ENCODE measurements at regions of chr9 and their contacts with region 1.

Region 1: GRCh38 chr9:6681147-6681956 is 35.8 kb upstream of the GLDC start:
- DNase-seq: peak; percentile 85
- ATAC-seq: peak; percentile 74
- H3K4me3 Mint-ChIP-seq: peak overlapping the region; percentile 97
- H3K27ac Mint-ChIP-seq: peak overlapping the region; percentile 100
- H3K4me1 Mint-ChIP-seq: peaks cover 44% of the 10 kb centered on the region
- H3K27me3 Mint-ChIP-seq: no peaks in the 10 kb centered on the region
- CTCF ChIP-seq: no peak

Region 2: DNA sequence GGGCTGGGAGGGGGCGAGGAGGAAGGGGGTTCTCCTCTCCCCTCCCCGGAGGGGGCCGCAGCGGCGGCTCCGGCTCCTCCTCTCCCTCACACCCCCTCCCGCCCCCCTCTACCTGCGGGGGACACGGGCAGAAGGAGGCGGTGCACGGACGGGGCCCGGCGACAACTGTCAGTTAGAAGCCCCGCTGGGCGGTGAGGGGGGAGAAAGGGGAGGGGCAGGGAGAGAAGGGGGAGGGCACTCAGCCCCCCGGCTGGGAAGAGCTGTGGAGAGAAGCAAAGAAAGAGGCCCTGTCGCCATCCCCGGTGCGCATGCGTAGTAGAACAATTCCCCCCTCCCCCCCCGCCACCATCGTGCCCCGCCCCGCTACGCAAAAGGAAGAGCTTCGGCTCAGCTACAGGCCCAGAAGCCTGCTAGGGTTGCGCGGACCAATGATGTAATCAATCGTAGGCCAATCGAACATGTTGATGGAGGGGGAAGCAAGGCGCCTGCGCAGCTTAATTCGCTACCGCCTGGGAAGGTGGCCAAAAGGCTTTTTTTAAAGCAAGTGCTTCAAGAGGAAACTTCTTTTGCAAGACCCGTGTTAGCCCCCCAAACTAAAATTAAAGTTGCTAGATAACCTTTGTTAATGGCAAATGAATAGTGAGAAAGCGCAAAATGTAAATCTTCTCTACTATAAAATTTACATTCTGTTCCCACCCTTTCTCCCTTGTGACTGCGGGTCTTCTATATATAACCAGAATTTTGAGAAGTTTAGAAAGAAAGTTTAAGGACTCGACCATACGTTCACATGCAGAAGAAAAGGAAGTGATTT is 673.0 kb before region 1 on chr9:
- CTCF ChIA-PET with region 1: no interaction called
- POLR2A ChIA-PET with region 1: interaction called, 4 read pairs
- intact Hi-C with region 1: loop called (anchors 1 kb)
- DNase-seq: peak; percentile 82
- ATAC-seq: peak; percentile 75
- H3K4me3 Mint-ChIP-seq: peak overlapping the region; percentile 85
- H3K27ac Mint-ChIP-seq: peak overlapping the region; percentile 87
- H3K4me1 Mint-ChIP-seq: peaks cover 57% of the 10 kb centered on the region
- H3K27me3 Mint-ChIP-seq: no peaks in the 10 kb centered on the region
- CTCF ChIP-seq: no peak

Region 3: GRCh38 chr9:6428940-6429889 is 252.1 kb before region 1 on chr9:
- CTCF ChIA-PET with region 1: no interaction called
- POLR2A ChIA-PET with region 1: no interaction called
- intact Hi-C with region 1: loop called (anchors 5 kb)
- DNase-seq: no peak
- ATAC-seq: peak; percentile 81
- H3K4me3 Mint-ChIP-seq: peak overlapping the region; percentile 64
- H3K27ac Mint-ChIP-seq: peak overlapping the region; percentile 73
- H3K4me1 Mint-ChIP-seq: peaks cover 80% of the 10 kb centered on the region
- H3K27me3 Mint-ChIP-seq: no peaks in the 10 kb centered on the region
- CTCF ChIP-seq: no peak

Region 4: DNA sequence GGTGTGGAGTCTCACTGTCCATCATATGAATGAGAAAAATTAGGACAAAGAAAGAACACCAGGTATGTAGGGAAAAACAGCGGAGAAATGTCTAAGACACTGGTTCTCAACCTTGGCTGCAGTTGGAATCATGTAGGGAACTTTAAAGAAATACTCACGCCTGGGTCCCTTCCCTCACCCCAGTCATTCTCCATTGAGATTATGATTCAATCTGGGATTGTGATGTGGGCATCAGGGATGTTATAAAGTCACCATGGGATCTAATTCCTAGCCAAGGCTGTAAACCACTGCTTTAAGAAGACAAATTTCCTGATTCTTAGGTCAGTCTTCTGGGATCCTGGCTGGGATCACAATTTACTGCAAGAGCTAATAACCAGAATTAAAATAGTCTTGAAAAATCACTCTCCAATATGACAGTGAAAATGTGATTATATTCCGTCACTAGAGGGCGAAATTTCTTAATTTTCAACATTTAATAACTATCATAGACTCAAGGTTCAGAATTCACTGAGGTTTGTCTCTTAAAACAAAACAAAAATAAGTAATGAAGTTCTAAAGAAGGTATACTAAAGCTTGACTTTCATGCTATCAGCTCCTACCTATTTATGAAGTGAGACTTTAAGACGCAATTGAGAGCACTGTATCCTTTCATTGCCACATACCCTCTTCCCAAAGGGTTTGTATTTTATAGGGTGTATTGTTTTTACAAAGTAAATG is 96.3 kb before region 1 on chr9:
- CTCF ChIA-PET with region 1: interaction called, 19 read pairs
- POLR2A ChIA-PET with region 1: interaction called, 11 read pairs
- intact Hi-C with region 1: loop called (anchors 1 kb)
- DNase-seq: no peak
- ATAC-seq: peak; percentile 54
- H3K4me3 Mint-ChIP-seq: no peak overlapping the region
- H3K27ac Mint-ChIP-seq: no peak overlapping the region
- H3K4me1 Mint-ChIP-seq: peaks cover 41% of the 10 kb centered on the region
- H3K27me3 Mint-ChIP-seq: no peaks in the 10 kb centered on the region
- CTCF ChIP-seq: no peak

Region 5: GRCh38 chr9:6645355-6646292 is 35.7 kb before region 1 on chr9 and contains the start of gene GLDC:
- CTCF ChIA-PET with region 1: interaction called, 3 read pairs
- POLR2A ChIA-PET with region 1: interaction called, 11 read pairs
- intact Hi-C with region 1: loop called (anchors 2 kb)
- DNase-seq: peak; percentile 39
- ATAC-seq: peak; percentile 86
- H3K4me3 Mint-ChIP-seq: peak within 1 kb of the TSS; percentile 80
- H3K27ac Mint-ChIP-seq: no peak within 1 kb of the TSS
- H3K4me1 Mint-ChIP-seq: peaks cover 19% of the 10 kb centered on the region
- H3K27me3 Mint-ChIP-seq: peaks cover 32% of the 10 kb centered on the region
- CTCF ChIP-seq: no peak
- total RNA-seq, gene GLDC: 2.3 and 2.6 TPM in 2 replicates

Region 6: DNA sequence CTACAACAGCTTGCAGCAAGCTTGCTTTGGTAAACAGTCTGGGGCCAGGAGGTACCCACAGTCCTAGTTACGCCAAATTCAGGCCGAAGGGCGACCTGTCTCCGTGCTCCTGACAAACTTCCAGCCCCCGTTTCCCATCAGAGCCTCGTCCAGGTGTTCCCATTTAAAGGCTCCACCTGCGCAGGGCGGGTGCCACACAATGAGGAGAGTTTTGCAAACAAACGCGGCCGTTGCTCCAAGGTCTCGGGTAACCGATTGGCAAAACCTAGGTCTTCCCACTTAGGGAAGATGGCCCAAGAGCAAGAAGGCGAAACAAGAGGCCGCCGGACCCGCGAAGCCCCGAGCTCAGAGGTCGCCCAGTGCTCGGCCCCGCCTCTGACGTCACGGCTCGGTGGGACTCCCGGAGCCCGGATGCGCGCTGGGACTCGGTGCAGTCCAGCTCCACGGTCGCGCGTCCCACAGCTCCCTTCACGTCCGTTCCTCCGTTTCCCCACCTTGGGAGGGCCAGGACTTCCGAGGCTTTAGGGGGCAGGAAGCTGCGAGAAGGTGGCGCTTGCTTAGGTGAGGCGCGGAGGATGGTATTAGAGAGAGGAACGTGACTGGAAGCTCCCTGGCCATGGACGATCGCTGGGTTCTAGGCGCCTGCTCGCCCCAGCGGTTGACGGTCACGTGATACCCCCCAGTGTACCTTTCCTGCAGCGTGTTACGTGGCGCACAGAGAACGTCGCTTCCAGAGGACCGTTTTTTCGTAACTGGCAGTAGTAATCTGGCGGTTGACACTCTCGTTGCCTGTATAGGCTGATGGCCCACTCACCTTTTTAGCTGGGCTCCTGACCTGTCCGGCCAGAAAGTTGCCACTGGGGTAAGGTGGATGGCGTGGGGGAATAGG is 34.6 kb after region 1 on chr9:
- CTCF ChIA-PET with region 1: interaction called, 3 read pairs
- POLR2A ChIA-PET with region 1: interaction called, 53 read pairs
- intact Hi-C with region 1: loop called (anchors 1 kb)
- DNase-seq: peak; percentile 71
- ATAC-seq: peak; percentile 86
- H3K4me3 Mint-ChIP-seq: peak overlapping the region; percentile 90
- H3K27ac Mint-ChIP-seq: peak overlapping the region; percentile 92
- H3K4me1 Mint-ChIP-seq: peaks cover 13% of the 10 kb centered on the region
- H3K27me3 Mint-ChIP-seq: no peaks in the 10 kb centered on the region
- CTCF ChIP-seq: no peak

Region 7: DNA sequence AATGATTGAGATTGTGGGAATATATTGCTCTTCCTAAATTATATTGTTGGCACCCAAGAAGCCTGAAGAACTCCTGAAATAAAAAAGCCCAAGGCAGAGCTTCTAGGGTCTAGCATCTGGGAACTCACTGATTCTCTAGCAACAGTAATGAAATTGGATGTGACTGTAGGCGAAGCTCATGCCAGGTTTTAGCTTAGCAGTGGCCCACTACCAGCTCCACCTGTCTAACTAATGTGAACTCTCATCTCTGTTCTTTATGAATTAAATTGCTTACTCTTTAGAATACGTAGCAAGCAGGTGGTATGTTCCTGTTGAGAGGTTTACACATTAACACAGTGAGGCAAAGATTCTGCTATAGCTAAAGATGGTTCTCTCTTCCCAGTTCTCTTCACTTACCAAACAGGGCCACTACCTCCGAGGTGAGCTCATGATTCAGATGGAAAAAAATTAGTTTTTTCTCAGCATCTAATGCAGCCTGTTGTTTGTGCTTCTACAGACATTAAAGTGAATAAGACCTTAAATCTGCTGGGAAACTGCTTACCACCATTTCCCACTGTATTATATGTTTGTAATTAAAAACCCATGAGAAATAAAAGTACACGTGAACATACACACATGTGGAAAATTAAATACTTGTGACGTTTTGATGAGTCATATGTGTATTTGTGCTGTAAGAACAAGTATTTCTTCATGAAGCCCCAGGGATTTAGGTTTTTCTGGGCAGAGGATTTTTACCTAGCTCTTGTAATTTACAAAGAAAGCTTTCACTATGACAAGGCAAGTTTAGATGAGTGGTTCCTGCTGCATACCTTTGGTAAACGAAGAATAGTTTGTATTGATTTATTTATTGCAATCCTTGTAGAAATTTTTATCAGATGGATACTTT is 436.6 kb after region 1 on chr9:
- CTCF ChIA-PET with region 1: no interaction called
- POLR2A ChIA-PET with region 1: no interaction called
- intact Hi-C with region 1: loop called (anchors 5 kb)
- DNase-seq: no peak
- ATAC-seq: peak; percentile 76
- H3K4me3 Mint-ChIP-seq: no peak overlapping the region
- H3K27ac Mint-ChIP-seq: peak overlapping the region; percentile 62
- H3K4me1 Mint-ChIP-seq: peaks cover 38% of the 10 kb centered on the region
- H3K27me3 Mint-ChIP-seq: no peaks in the 10 kb centered on the region
- CTCF ChIP-seq: no peak